ENCODE measurements at regions of chr2 and their contacts with region 1.

Region 1: DNA sequence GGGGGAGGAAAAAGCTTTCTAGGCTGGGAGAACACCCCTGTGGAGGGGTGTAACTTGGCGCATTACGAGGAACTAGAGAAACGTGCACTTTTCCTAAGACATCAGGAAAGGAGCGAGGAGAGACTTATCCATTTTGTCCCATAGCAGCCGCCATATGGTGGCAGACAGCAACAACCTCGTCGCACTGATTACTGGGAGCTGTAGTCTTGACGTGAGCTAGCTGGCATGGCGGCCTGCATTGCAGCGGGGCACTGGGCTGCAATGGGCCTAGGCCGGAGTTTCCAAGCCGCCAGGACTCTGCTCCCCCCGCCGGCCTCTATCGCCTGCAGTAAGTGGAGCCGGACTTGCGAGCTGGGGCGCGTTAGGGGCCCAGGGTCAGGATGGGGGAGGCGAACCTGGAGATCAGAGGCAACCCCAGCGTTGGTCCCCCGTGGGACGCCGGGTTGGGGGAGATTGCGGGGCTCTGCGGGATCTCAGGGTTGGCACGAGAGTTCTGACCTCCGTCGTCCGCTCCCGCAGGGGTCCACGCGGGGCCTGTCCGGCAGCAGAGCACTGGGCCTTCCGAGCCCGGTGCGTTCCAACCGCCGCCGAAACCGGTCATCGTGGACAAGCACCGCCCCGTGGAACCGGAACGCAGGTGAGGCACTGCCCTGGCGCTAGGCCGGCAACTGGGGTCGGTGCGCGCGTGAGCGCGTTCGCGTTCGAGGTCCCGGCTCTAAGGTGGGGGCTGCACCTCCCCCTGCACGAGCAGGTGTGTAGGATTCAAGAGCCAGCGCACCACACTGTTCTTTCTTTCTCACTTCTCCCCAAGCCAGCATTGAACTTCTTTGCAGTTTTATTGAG is at the start of gene MRPL19:
- H3K4me3 Mint-ChIP-seq: peak within 1 kb of the TSS; percentile 91
- H3K27ac Mint-ChIP-seq: peak within 1 kb of the TSS; percentile 92
- H3K4me1 Mint-ChIP-seq: peaks cover 15% of the 10 kb centered on the region
- H3K27me3 Mint-ChIP-seq: no peaks in the 10 kb centered on the region

Region 2: DNA sequence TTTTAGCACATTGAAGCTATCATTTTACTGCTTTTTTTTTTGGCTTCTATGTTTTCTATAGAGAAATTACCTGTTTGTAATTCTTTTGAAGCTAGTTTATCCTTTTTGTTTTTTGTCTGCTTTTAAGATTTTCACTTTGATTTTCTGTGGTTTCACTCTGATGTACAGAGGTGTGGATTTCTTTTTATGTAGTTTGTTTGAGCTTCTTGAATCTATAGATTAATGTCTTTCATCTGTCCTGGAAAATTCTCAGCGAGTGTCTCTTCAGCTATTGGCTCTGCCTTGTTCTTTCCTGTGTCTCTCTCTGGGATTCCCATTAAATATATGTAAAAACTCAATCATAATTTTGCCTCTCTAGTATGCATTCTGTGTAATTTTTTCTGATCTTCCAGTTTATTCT is 679.9 kb before region 1 on chr2:
- intact Hi-C with region 1: loop called (anchors 10 kb)
- H3K4me3 Mint-ChIP-seq: no peak overlapping the region
- H3K27ac Mint-ChIP-seq: peak overlapping the region; percentile 35
- H3K4me1 Mint-ChIP-seq: peaks cover 21% of the 10 kb centered on the region
- H3K27me3 Mint-ChIP-seq: no peaks in the 10 kb centered on the region

Region 3: DNA sequence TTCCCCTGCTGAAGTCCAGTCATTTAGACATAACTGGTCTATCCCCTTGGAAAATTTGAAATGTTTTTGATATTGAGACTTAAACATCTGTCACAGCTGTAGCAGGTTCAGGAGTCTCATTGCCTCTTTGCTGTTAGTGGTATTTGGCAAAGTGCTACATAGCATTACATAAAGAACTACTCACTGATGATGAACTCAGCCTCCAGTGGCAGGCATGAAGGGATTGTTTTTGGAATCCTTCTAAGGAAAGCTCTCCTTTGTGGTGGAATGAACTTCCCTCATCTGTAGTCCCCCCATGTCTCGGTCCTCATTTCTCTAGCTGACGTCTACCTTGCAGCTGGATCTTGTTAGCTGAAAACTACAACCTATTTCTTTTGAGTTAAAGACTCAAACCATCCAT is 559.1 kb before region 1 on chr2:
- intact Hi-C with region 1: no loop called
- H3K4me3 Mint-ChIP-seq: no peak overlapping the region
- H3K27ac Mint-ChIP-seq: no peak overlapping the region
- H3K4me1 Mint-ChIP-seq: no peaks in the 10 kb centered on the region
- H3K27me3 Mint-ChIP-seq: no peaks in the 10 kb centered on the region

Region 4: GRCh38 chr2:75709297-75709696 is 62.5 kb after region 1 on chr2:
- intact Hi-C with region 1: loop called (anchors 2 kb)
- H3K4me3 Mint-ChIP-seq: peak overlapping the region; percentile 20
- H3K27ac Mint-ChIP-seq: no peak overlapping the region
- H3K4me1 Mint-ChIP-seq: peaks cover 13% of the 10 kb centered on the region
- H3K27me3 Mint-ChIP-seq: no peaks in the 10 kb centered on the region

Measured in dendritic cell treated with granulocyte-macrophage colony-stimulating factor and Interleukin-4, amounts not matched to agents 40 ng/mL and 50 ng/mL, for 4 days (primary cell).